ENCODE measurements at regions of chr2 and their contacts with region 1.

Region 1: DNA sequence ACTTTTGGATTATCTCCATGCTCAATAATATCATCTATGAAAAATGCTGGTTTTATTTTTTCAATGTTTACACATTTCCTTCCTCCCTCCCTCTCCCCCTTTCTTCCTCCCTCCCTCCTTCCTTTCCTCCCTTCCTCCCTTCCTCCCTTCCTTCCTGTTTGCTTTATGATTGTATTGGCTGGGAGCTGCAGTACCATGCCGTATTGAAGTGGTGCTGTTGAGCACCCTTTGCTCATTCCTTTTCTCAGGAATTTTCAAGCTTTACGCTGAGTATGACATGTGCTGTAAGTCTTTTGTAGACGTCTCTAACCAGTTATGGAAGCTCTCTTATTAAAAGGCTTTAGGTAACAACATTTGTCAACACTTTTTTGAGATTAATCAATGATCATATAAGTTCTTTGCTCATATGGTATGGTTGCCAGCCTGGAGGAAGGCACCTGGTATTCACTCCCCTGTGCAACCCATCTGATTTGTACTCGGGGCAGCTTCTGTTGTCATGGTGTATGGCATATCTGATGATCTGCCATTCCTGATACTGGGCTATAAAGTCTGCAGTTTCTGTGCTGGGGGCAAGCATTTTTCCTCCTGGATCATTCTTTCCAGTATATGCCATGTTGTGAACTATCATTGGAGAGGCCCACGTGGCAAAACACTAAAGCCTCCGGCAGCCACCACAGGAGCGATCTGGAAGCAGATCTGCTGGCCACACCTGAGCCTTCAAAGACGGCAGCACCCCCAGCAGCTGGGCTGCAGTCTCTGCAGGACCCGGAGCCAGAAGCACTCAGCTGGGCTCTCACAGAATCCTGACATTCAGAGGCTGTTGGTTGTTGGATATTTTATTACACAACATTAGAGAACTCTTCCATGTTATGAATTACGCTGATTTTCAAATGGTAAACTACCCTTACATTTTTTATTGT is 100.7 kb downstream of the SNTG2 start:
- DNase-seq: peak; percentile 44
- H3K4me3 ChIP-seq: no peak overlapping the region; a peak in 1 of 4 replicates
- H3K27ac ChIP-seq: no peak overlapping the region
- H3K4me1 ChIP-seq: peaks cover 0 to 19% of the 10 kb centered on the region in 2 experiments; a peak in 2 of 4 replicates
- H3K27me3 ChIP-seq: no peaks in the 10 kb centered on the region
- CTCF ChIP-seq: no peak; the same call in 1 of the 2 replicates
- EP300 ChIP-seq: no peak
- RAD21 ChIP-seq: no peak; the same call in none of the 2 replicates

Region 2: DNA sequence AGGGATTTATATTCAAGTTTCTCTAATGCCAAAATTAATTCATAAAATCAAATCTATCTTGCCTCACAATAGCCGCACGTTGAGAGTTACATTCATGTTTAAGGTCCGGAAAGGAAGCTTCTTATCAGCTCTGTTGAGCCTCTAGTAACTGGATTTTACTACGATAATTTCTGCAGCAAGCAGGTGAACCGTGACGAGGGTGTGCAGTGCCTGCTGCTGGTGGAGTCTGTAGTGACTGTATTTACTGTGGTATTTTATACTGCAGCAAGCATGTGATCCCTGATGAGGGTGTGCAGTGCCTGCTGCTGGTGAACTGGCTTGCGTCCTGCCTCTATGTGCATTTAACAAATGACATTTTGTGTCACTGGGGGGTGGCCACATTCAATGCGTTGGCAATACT is 19.3 kb after region 1 on chr2:
- CTCF ChIA-PET with region 1: interaction called, 19 read pairs
- POLR2A ChIA-PET with region 1: no interaction called
- DNase-seq: peak; percentile 76
- H3K4me3 ChIP-seq: no peak overlapping the region; a peak in 1 of 4 replicates
- H3K27ac ChIP-seq: no peak overlapping the region
- H3K4me1 ChIP-seq: peaks cover 0 to 8% of the 10 kb centered on the region in 2 experiments; a peak in 2 of 4 replicates
- H3K27me3 ChIP-seq: no peaks in the 10 kb centered on the region
- CTCF ChIP-seq: no peak
- EP300 ChIP-seq: peak in 1 of 2 experiments; percentile 37; a peak in 1 of 4 replicates
- RAD21 ChIP-seq: peak; percentile 63

Region 3: DNA sequence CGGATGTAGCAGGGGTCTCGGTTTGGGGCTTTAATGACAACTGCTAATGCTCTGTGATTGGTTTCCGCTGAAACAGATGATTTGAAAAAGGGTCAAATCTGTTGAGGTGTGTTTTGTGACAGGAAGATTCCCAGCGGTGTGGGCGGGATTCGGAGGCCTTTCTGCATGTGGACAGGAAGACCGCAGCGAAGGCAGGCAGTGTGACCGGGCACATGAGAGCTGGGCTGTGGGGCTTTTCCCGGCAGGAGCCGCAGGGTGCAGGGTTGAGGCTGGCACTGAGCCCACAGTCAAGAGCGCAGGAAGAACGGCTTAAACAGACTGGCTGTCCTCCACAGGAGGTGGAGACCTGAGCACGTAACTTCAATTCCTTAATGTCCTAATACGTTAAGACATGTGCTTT is 182.0 kb after region 1 on chr2:
- CTCF ChIA-PET with region 1: no interaction called
- POLR2A ChIA-PET with region 1: no interaction called
- DNase-seq: peak; percentile 58
- H3K4me3 ChIP-seq: no peak overlapping the region
- H3K27ac ChIP-seq: no peak overlapping the region
- H3K4me1 ChIP-seq: no peaks in the 10 kb centered on the region
- H3K27me3 ChIP-seq: no peaks in the 10 kb centered on the region
- CTCF ChIP-seq: no peak
- EP300 ChIP-seq: no peak
- RAD21 ChIP-seq: no peak

Measured in SK-N-SH (cell line).